HCT116 (cell line): ENCODE measurements at regions of chr18 and their contacts with region 1.

Region 1: GRCh38 chr18:28439870-28440269 is 262.9 kb upstream of the CDH2 start:
- DNase-seq: no peak
- ATAC-seq: no peak
- H3K4me3 ChIP-seq: no peak overlapping the region
- H3K27ac ChIP-seq: no peak overlapping the region
- H3K4me1 ChIP-seq: no peaks in the 10 kb centered on the region
- H3K27me3 ChIP-seq: no peaks in the 10 kb centered on the region
- CTCF ChIP-seq: no peak
- POLR2A ChIP-seq: no peak
- RAD21 ChIP-seq: no peak

Region 2: GRCh38 chr18:28045176-28045810 is 394.6 kb before region 1 on chr18:
- CTCF ChIA-PET with region 1: no interaction called
- POLR2A ChIA-PET with region 1: no interaction called
- RAD21 ChIA-PET with region 1: no interaction called
- intact Hi-C with region 1: loop called (anchors 5 kb)
- DNase-seq: no peak
- ATAC-seq: no peak
- H3K4me3 ChIP-seq: no peak overlapping the region
- H3K27ac ChIP-seq: no peak overlapping the region
- H3K4me1 ChIP-seq: no peaks in the 10 kb centered on the region
- H3K27me3 ChIP-seq: no peaks in the 10 kb centered on the region
- CTCF ChIP-seq: no peak
- POLR2A ChIP-seq: no peak
- RAD21 ChIP-seq: no peak

Region 3: GRCh38 chr18:30066288-30066687 is 1626.4 kb after region 1 on chr18:
- CTCF ChIA-PET with region 1: no interaction called
- POLR2A ChIA-PET with region 1: no interaction called
- RAD21 ChIA-PET with region 1: no interaction called
- intact Hi-C with region 1: no loop called
- DNase-seq: no peak
- ATAC-seq: no peak
- H3K4me3 ChIP-seq: no peak overlapping the region
- H3K27ac ChIP-seq: no peak overlapping the region
- H3K4me1 ChIP-seq: no peaks in the 10 kb centered on the region
- H3K27me3 ChIP-seq: no peaks in the 10 kb centered on the region
- CTCF ChIP-seq: no peak
- POLR2A ChIP-seq: no peak
- RAD21 ChIP-seq: no peak